ENCODE measurements at regions of chr2 and their contacts with region 1.

Region 1: DNA sequence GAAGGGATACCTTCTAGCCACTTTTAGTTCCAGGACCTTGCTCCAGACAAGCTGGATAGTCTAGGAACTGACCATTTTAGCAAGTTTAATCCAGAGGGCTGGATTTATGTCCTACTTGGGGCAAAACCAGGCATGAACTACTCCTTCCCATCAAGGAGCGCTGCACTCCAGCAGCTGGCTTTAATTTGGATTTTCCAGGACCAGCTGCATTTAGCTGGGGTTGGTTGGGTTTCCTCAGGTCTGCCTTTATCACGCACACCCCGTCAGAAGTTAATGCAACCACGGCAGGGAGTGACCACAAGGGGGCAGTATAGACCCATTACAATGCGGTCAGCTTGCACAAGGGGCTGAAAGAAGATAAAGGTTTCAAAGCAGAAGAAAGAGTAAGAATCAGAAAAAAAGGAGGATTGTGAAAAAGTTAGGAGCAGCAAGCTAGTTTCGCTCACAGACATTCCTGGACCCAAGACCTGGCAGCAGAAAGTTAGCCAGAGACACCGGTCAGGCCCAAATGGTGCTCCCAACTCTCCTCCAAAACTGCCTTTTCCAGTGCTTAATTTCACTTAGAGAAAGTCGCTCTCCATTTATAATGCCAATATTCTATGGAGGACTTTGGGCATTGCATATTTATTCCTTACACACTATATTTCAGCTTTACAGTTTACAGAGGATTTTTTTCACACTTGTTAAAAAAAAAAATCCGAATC is 40.1 kb downstream of the SLC4A1AP start:
- DNase-seq: peak; percentile 86 to 90 (median 88)
- ATAC-seq: peak; percentile 25
- H3K4me3 ChIP-seq: no peak overlapping the region
- H3K27ac ChIP-seq: no peak overlapping the region
- H3K4me1 ChIP-seq: peaks cover 47% of the 10 kb centered on the region
- H3K27me3 ChIP-seq: no peaks in the 10 kb centered on the region
- CTCF ChIP-seq: peak; percentile 86 to 96 (median 94)
- POLR2A ChIP-seq: no peak

Region 2: DNA sequence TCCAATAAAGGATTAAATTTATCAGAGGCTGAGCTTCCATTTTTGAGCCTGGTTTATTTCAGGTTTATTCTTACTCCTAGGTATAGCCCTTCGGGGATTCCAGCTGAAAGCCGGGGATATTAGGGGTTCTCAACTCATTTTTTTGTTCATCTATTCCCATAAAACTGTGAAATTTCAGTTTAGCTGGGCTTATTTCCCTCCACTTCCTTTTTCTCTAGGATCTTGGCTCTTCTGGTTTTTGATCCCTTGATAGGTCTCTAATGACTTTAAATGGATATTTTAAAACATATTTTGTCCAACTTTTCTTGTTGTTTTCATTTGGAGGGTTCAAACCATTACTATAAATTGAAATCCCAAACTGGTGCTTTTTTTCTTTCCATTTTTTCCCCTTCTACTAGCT is 144.6 kb before region 1 on chr2:
- intact Hi-C with region 1: no loop called
- DNase-seq: no peak
- ATAC-seq: no peak
- H3K4me3 ChIP-seq: no peak overlapping the region
- H3K27ac ChIP-seq: no peak overlapping the region
- H3K4me1 ChIP-seq: no peaks in the 10 kb centered on the region
- H3K27me3 ChIP-seq: peaks cover 0 to 3% of the 10 kb centered on the region in 2 donors
- CTCF ChIP-seq: no peak
- POLR2A ChIP-seq: no peak

Region 3: GRCh38 chr2:28036307-28036706 is 332.5 kb after region 1 on chr2:
- intact Hi-C with region 1: no loop called
- DNase-seq: no peak
- ATAC-seq: no peak
- H3K4me3 ChIP-seq: no peak overlapping the region
- H3K27ac ChIP-seq: no peak overlapping the region
- H3K4me1 ChIP-seq: no peaks in the 10 kb centered on the region
- H3K27me3 ChIP-seq: no peaks in the 10 kb centered on the region
- CTCF ChIP-seq: no peak
- POLR2A ChIP-seq: no peak

Region 4: DNA sequence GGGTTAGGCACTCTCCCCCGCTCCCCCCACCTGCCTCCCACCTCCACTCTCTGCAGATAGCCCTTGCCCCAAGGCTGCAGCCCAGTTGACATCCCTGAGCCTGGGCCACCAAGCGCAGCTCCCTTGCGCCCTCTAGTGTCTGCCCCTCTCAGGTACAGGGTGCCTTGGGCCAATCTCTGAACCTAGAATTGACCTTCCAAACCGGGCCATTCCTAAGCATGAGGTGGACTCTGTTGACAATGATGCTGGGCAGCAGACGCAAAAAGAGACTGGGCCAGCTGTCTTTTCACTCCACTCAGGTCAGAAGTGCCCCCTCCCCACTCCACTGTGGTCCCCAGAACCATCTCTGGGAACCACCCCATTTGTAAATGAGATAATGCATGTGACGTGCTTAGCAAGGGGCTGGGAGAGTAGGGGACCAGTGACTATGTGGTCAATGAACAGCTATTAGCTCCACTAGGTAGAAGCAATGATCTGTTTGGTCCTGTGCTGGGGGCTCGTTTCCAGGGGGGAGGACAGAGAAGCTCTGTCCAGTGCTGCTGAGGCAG is 748.8 kb after region 1 on chr2:
- intact Hi-C with region 1: loop called (anchors 5 kb)
- DNase-seq: peak; percentile 72 to 79 (median 76)
- ATAC-seq: peak; percentile 82
- H3K4me3 ChIP-seq: no peak overlapping the region
- H3K27ac ChIP-seq: no peak overlapping the region
- H3K4me1 ChIP-seq: no peaks in the 10 kb centered on the region
- H3K27me3 ChIP-seq: no peaks in the 10 kb centered on the region
- CTCF ChIP-seq: peak; percentile 77 to 90 (median 86)
- POLR2A ChIP-seq: no peak